Prostate gland (tissue), 2 donors: ENCODE measurements at regions of chr3 and their contacts with region 1.

Region 1: GRCh38 chr3:4722103-4722502 is 229.0 kb downstream of the ITPR1 start:
- DNase-seq: peak; percentile 43
- H3K4me3 ChIP-seq: no peak overlapping the region
- H3K27ac ChIP-seq: peak overlapping the region; percentile 59
- H3K4me1 ChIP-seq: peaks cover 8% of the 10 kb centered on the region
- H3K27me3 ChIP-seq: no peaks in the 10 kb centered on the region
- CTCF ChIP-seq: peak in 3 of 4 experiments; percentile 34 to 62 (median 62)
- POLR2A ChIP-seq: no peak

Region 2: GRCh38 chr3:4751502-4752101 is 29.5 kb after region 1 on chr3:
- intact Hi-C with region 1: no loop called
- DNase-seq: no peak
- H3K4me3 ChIP-seq: no peak overlapping the region
- H3K27ac ChIP-seq: peak overlapping the region; percentile 74 to 80
- H3K4me1 ChIP-seq: no peaks in the 10 kb centered on the region
- H3K27me3 ChIP-seq: no peaks in the 10 kb centered on the region
- CTCF ChIP-seq: no peak
- POLR2A ChIP-seq: no peak

Region 3: GRCh38 chr3:4826237-4827100 is 104.4 kb after region 1 on chr3:
- intact Hi-C with region 1: loop called (anchors 2 kb)
- DNase-seq: peak; percentile 14
- H3K4me3 ChIP-seq: no peak overlapping the region
- H3K27ac ChIP-seq: peak overlapping the region; percentile 38 to 54
- H3K4me1 ChIP-seq: peaks cover 8% of the 10 kb centered on the region
- H3K27me3 ChIP-seq: no peaks in the 10 kb centered on the region
- CTCF ChIP-seq: no peak
- POLR2A ChIP-seq: no peak